ENCODE measurements at regions of chr20 and their contacts with region 1.

Region 1: DNA sequence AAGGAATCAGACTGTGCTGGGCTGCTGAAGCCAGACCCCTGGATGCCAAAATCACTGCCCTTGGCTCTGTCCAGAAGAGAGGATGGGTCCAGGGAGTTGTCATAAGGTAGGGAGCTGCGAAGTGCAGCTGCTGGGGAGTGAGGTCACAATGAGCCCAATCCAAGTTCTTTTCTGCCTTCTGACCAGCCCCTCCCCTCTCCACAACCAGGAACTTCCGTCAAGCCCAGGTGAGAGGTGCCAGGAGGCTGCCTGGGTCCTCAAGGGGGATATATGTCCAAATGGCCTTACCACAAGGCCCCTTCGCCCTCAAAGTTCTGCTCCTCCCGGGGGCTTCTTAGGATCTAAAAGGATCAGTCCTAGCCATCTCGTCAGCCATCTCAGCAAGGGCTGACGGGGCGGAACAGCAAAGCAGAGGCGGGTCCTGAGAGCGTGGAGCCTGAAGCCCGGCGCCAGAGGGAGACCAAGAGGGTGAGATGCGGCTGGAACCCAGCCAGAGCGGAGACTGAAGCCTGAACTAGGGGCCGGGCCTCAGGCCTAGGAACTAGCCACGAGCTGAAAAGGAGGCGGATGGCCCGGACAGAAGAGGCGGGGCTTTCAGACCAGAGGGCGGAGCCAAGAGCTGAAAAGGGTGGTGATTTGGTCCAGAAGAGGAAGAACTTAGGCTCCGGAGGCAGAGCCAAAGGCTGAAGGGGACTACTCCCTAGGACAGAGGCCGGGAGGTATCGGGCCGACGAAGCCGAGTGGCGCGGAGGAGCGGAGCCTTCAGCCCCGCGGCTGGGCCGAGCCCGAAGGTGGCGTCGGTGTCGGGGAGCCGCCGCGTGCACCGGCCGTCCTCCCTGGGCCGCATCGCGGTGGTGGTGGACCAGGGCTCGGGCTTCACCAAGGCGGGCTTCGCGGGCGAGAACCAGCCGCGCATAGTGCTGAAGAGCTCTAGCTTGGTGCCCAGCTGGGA is at the start of gene ACTL10:
- DNase-seq: peak; percentile 83
- ATAC-seq: peak; percentile 75
- H3K4me3 Mint-ChIP-seq: peak within 1 kb of the TSS; percentile 93
- H3K27ac Mint-ChIP-seq: peak within 1 kb of the TSS; percentile 95
- H3K4me1 Mint-ChIP-seq: peaks cover 34% of the 10 kb centered on the region
- H3K27me3 Mint-ChIP-seq: no peaks in the 10 kb centered on the region
- CTCF ChIP-seq: no peak
- total RNA-seq, gene ACTL10: 2.8 and 3.9 TPM in 2 replicates

Region 2: GRCh38 chr20:33394721-33395120 is 271.8 kb before region 1 on chr20:
- CTCF ChIA-PET with region 1: interaction called, 15 read pairs
- POLR2A ChIA-PET with region 1: no interaction called
- intact Hi-C with region 1: no loop called
- DNase-seq: no peak
- ATAC-seq: no peak
- H3K4me3 Mint-ChIP-seq: no peak overlapping the region
- H3K27ac Mint-ChIP-seq: no peak overlapping the region
- H3K4me1 Mint-ChIP-seq: peaks cover 20% of the 10 kb centered on the region
- H3K27me3 Mint-ChIP-seq: no peaks in the 10 kb centered on the region
- CTCF ChIP-seq: no peak

Region 3: DNA sequence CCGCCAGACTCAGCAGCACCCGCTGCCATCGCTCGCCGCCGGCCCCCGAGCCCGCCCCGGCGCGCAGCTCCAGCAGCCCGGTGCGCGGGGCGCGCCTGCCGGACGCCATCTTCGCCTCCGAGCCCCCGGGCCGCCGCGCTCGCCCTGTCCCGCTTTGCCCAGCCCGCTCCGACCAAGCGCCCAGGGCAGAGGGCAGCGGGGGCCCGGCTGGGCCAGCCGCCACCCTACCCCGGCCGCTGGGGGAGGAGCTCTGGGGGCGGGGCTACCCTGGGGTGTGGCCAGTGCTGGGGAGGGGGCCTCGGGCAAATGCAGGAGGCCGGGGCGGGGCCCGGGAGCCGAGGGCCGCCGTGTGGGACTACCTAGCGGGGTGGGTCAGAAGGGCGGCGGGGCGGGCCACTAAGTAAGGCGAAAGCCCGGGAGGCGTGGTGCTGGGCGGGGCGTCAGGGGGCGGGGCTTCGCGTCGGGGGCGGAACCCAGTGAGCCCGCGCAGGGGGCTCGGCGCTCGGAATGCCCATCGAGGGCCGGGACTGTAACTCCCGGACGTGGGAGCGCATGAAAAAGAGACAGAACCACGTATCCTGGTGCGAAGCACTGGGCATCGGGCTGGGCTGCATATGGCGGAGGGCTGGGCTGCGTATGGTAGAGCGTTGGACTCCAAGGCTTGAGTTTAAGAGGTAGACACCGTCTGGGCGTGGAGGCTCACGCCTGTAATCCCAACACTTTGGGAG is 222.9 kb before region 1 on chr20 and contains the start of gene SNTA1:
- CTCF ChIA-PET with region 1: interaction called, 6 read pairs
- POLR2A ChIA-PET with region 1: interaction called, 7 read pairs
- intact Hi-C with region 1: loop called (anchors 1 kb)
- DNase-seq: peak; percentile 86
- ATAC-seq: peak; percentile 89
- H3K4me3 Mint-ChIP-seq: peak within 1 kb of the TSS; percentile 89
- H3K27ac Mint-ChIP-seq: peak within 1 kb of the TSS; percentile 83
- H3K4me1 Mint-ChIP-seq: peaks cover 29% of the 10 kb centered on the region
- H3K27me3 Mint-ChIP-seq: no peaks in the 10 kb centered on the region
- CTCF ChIP-seq: no peak
- total RNA-seq, gene SNTA1: 1.7 and 2.0 TPM in 2 replicates

Region 4: DNA sequence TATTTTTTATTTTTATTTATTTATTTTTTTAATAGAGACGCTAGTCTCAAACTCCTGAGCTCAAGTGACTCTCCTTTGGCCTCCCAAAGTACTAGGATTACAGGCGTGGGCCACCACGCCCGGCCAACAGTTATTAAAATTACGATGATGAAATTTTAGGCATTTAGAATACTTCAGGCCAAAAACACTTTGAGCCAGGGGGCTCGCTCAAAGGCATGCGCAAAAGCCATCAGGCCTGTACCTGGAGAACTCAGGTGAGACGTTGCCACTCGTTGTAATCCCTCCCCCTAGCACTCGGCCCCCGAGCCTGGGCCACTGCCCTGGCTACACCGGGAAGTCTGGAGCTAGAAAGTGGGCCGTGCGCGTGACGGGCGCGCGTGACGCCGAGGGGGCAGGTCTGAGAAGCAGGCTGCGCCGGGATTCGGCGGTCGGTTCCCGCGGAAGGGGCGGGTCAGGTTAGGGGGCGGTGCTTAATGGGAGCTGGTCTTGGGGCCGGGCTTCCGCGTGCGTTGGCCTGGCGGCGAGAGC is 177.0 kb before region 1 on chr20:
- CTCF ChIA-PET with region 1: interaction called, 10 read pairs
- POLR2A ChIA-PET with region 1: interaction called, 20 read pairs
- intact Hi-C with region 1: loop called (anchors 1 kb)
- DNase-seq: peak; percentile 99
- ATAC-seq: peak; percentile 96
- H3K4me3 Mint-ChIP-seq: peak overlapping the region; percentile 84
- H3K27ac Mint-ChIP-seq: peak overlapping the region; percentile 88
- H3K4me1 Mint-ChIP-seq: peaks cover 15% of the 10 kb centered on the region
- H3K27me3 Mint-ChIP-seq: no peaks in the 10 kb centered on the region
- CTCF ChIP-seq: no peak

Region 5: GRCh38 chr20:33686100-33686983 is 19.8 kb after region 1 on chr20 and contains the start of gene E2F1:
- CTCF ChIA-PET with region 1: interaction called, 5 read pairs
- POLR2A ChIA-PET with region 1: interaction called, 15 read pairs
- intact Hi-C with region 1: loop called (anchors 1 kb)
- DNase-seq: peak; percentile 95
- ATAC-seq: peak; percentile 93
- H3K4me3 Mint-ChIP-seq: peak within 1 kb of the TSS; percentile 86
- H3K27ac Mint-ChIP-seq: peak within 1 kb of the TSS; percentile 77
- H3K4me1 Mint-ChIP-seq: peaks cover 30% of the 10 kb centered on the region
- H3K27me3 Mint-ChIP-seq: no peaks in the 10 kb centered on the region
- CTCF ChIP-seq: no peak
- total RNA-seq, gene E2F1: 6.7 and 8.9 TPM in 2 replicates

Region 6: GRCh38 chr20:33810885-33811777 is 144.6 kb after region 1 on chr20 and contains the start of gene CHMP4B:
- CTCF ChIA-PET with region 1: interaction called, 4 read pairs
- POLR2A ChIA-PET with region 1: interaction called, 3 read pairs
- intact Hi-C with region 1: loop called (anchors 1 kb)
- DNase-seq: peak; percentile 97
- ATAC-seq: peak; percentile 95
- H3K4me3 Mint-ChIP-seq: peak within 1 kb of the TSS; percentile 98
- H3K27ac Mint-ChIP-seq: peak within 1 kb of the TSS; percentile 92
- H3K4me1 Mint-ChIP-seq: peaks cover 45% of the 10 kb centered on the region
- H3K27me3 Mint-ChIP-seq: no peaks in the 10 kb centered on the region
- CTCF ChIP-seq: no peak
- total RNA-seq, gene CHMP4B: 116 and 121 TPM in 2 replicates

Region 7: DNA sequence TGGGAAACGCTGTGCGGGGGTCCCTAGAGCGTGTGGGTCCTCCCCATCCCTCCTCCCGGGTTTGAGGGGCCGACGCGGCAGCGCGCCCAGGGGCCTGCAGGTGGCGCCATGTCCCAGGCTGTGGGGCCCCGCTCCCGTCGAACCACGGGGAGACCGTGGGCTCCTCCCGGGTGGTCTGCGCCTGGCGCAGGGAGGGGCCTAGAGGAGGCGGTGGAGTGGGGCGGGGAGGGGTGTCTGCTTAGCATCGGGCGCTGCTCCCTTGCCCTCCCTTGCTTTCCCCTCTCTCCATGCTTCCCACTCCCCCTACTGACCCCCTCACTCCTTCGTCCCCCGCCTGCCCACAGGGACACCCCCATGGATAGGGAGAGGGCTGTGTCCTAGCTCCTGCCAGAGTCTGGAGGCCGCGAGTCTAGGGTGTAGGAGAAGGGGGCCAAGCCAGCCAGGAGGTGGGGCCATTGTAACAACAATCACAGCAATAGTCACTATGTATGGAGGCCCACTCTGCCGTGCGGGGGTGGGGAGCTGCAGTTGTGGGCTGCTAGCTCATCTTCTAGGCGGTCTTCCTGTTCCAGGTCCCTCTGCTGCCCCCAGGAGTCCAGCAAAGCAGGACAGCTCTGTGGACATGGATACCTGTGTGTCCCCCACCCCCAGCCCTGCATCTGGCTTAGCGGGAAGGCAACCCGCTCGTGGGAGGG is 196.3 kb after region 1 on chr20:
- CTCF ChIA-PET with region 1: no interaction called
- POLR2A ChIA-PET with region 1: no interaction called
- intact Hi-C with region 1: no loop called
- DNase-seq: peak; percentile 54
- ATAC-seq: peak; percentile 60
- H3K4me3 Mint-ChIP-seq: no peak overlapping the region
- H3K27ac Mint-ChIP-seq: no peak overlapping the region
- H3K4me1 Mint-ChIP-seq: peaks cover 26% of the 10 kb centered on the region
- H3K27me3 Mint-ChIP-seq: no peaks in the 10 kb centered on the region
- CTCF ChIP-seq: no peak

Region 8: GRCh38 chr20:34111702-34112599 is 445.4 kb after region 1 on chr20 and contains the start of gene EIF2S2:
- CTCF ChIA-PET with region 1: no interaction called
- POLR2A ChIA-PET with region 1: interaction called, 19 read pairs
- intact Hi-C with region 1: loop called (anchors 5 kb)
- DNase-seq: peak; percentile 87
- ATAC-seq: peak; percentile 84
- H3K4me3 Mint-ChIP-seq: peak within 1 kb of the TSS; percentile 96
- H3K27ac Mint-ChIP-seq: peak within 1 kb of the TSS; percentile 98
- H3K4me1 Mint-ChIP-seq: peaks cover 49% of the 10 kb centered on the region
- H3K27me3 Mint-ChIP-seq: no peaks in the 10 kb centered on the region
- CTCF ChIP-seq: no peak
- total RNA-seq, gene EIF2S2: 58.3 and 62.2 TPM in 2 replicates

Region 9: GRCh38 chr20:34403908-34404307 is 737.3 kb after region 1 on chr20:
- CTCF ChIA-PET with region 1: no interaction called
- POLR2A ChIA-PET with region 1: no interaction called
- intact Hi-C with region 1: no loop called
- DNase-seq: no peak
- ATAC-seq: peak; percentile 60
- H3K4me3 Mint-ChIP-seq: peak overlapping the region; percentile 24
- H3K27ac Mint-ChIP-seq: peak overlapping the region; percentile 68
- H3K4me1 Mint-ChIP-seq: peaks cover 53% of the 10 kb centered on the region
- H3K27me3 Mint-ChIP-seq: no peaks in the 10 kb centered on the region
- CTCF ChIP-seq: no peak

Measured in activated B cell treated with CpG ODN at 0.5 μM for 24 hours (primary cell).